ENCODE measurements at regions of chr13 and their contacts with region 1.

Region 1: GRCh38 chr13:30422054-30422839 is at the start of gene UBE2L5:
- DNase-seq: peak; percentile 75
- ATAC-seq: peak; percentile 94
- H3K4me3 Mint-ChIP-seq: peak within 1 kb of the TSS; percentile 88
- H3K27ac Mint-ChIP-seq: peak within 1 kb of the TSS; percentile 94
- H3K4me1 Mint-ChIP-seq: peaks cover 43% of the 10 kb centered on the region
- H3K27me3 Mint-ChIP-seq: no peaks in the 10 kb centered on the region
- CTCF ChIP-seq: no peak
- total RNA-seq, gene UBE2L5: 0.24 and 0.42 TPM in 2 replicates

Region 2: DNA sequence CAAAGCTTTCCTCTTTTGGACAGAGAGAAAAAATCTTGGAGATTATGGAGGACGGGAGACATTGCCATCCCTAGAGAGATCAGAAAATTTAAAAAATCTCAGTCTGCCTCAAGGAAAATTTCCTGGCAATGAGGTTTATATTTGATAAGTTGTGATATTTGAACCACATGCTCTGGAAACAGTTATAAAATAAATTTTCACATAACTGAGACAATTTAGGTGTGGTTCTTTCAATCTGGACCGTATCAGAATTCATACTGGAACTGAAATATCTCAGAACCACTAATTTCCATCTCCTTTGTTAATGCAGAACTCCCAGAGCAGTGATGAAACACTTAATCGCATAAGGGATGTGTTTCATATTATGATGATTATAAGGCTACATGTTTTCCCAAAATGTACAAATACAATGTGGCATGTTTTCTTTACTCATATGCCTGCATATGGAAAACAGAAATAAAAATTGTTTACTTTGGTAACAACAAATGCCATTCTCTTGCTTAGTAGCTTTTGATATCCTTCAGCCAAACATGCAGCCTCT is 13.7 kb after region 1 on chr13:
- CTCF ChIA-PET with region 1: no interaction called
- POLR2A ChIA-PET with region 1: interaction called, 22 read pairs
- intact Hi-C with region 1: no loop called
- DNase-seq: no peak
- ATAC-seq: no peak
- H3K4me3 Mint-ChIP-seq: no peak overlapping the region
- H3K27ac Mint-ChIP-seq: no peak overlapping the region
- H3K4me1 Mint-ChIP-seq: peaks cover 22% of the 10 kb centered on the region
- H3K27me3 Mint-ChIP-seq: no peaks in the 10 kb centered on the region
- CTCF ChIP-seq: no peak

Region 3: DNA sequence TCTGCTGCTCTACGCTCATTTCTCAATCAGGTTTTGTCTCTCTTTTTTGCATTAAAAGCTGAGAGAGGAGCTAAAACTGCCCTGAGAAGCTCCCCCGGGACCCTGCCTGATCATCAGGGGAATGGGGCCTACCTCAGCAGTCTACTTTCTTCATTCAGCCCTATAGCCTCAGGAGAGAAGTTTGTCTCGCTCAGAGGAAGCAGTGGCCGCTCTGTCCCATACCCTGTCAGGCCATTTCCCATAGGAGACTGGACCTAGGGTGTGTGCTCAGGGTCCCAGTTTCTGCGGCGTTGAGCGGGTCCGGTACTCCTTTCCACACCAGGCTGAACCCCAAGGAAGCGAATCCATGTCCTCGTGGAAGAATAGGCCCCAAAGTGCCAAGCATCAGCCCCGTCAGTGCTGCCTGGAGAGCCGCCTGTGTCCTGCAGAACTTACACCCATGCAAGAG is 21.7 kb after region 1 on chr13:
- CTCF ChIA-PET with region 1: interaction called, 8 read pairs
- POLR2A ChIA-PET with region 1: interaction called, 120 read pairs
- intact Hi-C with region 1: loop called (anchors 1 kb)
- DNase-seq: peak; percentile 76
- ATAC-seq: peak; percentile 88
- H3K4me3 Mint-ChIP-seq: peak overlapping the region; percentile 79
- H3K27ac Mint-ChIP-seq: peak overlapping the region; percentile 97
- H3K4me1 Mint-ChIP-seq: peaks cover 72% of the 10 kb centered on the region
- H3K27me3 Mint-ChIP-seq: no peaks in the 10 kb centered on the region
- CTCF ChIP-seq: no peak

Region 4: DNA sequence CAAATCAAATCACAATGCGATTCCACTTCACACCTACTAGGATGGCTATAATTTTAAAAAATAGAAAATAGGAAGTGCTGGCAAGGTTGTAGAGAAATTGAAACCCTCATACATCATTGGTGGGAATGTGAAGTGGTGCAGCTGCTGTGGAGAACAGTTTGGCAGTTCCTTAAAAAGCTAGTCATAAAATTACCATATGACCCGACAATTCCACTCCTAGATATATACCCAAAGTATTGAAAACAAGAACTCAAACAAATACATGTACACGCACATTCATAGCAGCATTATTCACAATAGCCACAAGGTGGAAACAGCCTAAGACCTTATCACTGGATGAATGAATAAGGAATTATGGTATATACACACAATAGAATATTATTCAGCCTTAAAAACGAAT is 31.5 kb after region 1 on chr13:
- CTCF ChIA-PET with region 1: interaction called, 3 read pairs
- POLR2A ChIA-PET with region 1: interaction called, 10 read pairs
- intact Hi-C with region 1: no loop called
- DNase-seq: no peak
- ATAC-seq: peak; percentile 54
- H3K4me3 Mint-ChIP-seq: no peak overlapping the region
- H3K27ac Mint-ChIP-seq: peak overlapping the region; percentile 46
- H3K4me1 Mint-ChIP-seq: peaks cover 39% of the 10 kb centered on the region
- H3K27me3 Mint-ChIP-seq: no peaks in the 10 kb centered on the region
- CTCF ChIP-seq: no peak